ENCODE measurements at regions of chr1 and their contacts with region 1.

Region 1: GRCh38 chr1:89762779-89763648 is 57.8 kb upstream of the LRRC8D start:
- DNase-seq: peak; percentile 95
- H3K4me3 ChIP-seq: peak overlapping the region; percentile 5 to 34 (median 33)
- H3K27ac ChIP-seq: peak overlapping the region; percentile 52
- H3K4me1 ChIP-seq: peaks cover 46% of the 10 kb centered on the region
- H3K27me3 ChIP-seq: no peaks in the 10 kb centered on the region
- CTCF ChIP-seq: peak; percentile 98
- POLR2A ChIP-seq: peak; percentile 58

Region 2: DNA sequence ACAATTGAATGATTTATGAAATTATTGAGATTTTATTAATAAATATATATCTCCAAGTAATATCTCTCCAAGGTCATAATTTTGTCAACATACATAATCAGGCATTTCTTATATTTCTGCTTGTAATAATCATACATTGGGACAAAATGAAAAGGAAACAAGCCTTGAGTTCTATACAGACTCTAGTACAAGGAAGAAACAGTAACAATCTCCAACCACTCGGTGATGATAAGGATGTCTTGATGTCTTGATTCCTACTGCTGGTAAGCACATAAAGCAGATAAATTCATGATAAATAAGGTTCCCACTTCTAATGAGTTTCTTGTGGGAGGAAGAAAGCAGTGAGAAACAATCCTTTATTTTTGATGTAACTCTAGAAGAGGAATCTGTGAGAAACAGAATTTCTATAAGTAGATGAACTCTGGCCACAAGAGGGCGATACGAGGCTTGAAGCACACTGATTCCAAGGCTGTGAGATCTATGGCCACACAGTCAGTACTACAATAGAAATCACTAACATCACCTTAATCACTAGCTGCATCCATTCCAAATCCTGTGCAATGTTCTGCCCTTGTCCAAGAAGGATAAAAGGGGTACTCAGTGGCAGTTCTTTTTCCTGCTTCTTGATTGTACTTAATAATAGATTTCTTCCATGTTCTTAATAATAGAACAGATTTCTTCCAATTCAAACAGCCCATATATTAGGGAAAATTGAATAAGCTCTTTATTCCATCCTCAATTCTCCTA is 279.8 kb before region 1 on chr1:
- CTCF ChIA-PET with region 1: interaction called, 99 read pairs
- POLR2A ChIA-PET with region 1: interaction called, 3 read pairs
- dilution Hi-C with region 1: no loop called
- intact Hi-C with region 1: loop called (anchors 1 kb)
- DNase-seq: peak; percentile 83
- H3K4me3 ChIP-seq: no peak overlapping the region
- H3K27ac ChIP-seq: no peak overlapping the region
- H3K4me1 ChIP-seq: no peaks in the 10 kb centered on the region
- H3K27me3 ChIP-seq: peaks cover 0 to 7% of the 10 kb centered on the region in 2 experiments
- CTCF ChIP-seq: peak; percentile 61 to 67
- POLR2A ChIP-seq: no peak

Region 3: GRCh38 chr1:89598450-89599331 is 164.3 kb before region 1 on chr1:
- CTCF ChIA-PET with region 1: interaction called, 36 read pairs
- POLR2A ChIA-PET with region 1: no interaction called
- dilution Hi-C with region 1: no loop called
- intact Hi-C with region 1: loop called (anchors 1 kb)
- DNase-seq: peak; percentile 68
- H3K4me3 ChIP-seq: no peak overlapping the region
- H3K27ac ChIP-seq: no peak overlapping the region
- H3K4me1 ChIP-seq: peaks cover 1% of the 10 kb centered on the region
- H3K27me3 ChIP-seq: no peaks in the 10 kb centered on the region
- CTCF ChIP-seq: peak; percentile 33 to 48
- POLR2A ChIP-seq: no peak

Region 4: GRCh38 chr1:89622895-89623294 is 140.1 kb before region 1 on chr1:
- CTCF ChIA-PET with region 1: interaction called, 230 read pairs
- POLR2A ChIA-PET with region 1: no interaction called
- dilution Hi-C with region 1: no loop called
- intact Hi-C with region 1: no loop called
- DNase-seq: no peak
- H3K4me3 ChIP-seq: no peak overlapping the region
- H3K27ac ChIP-seq: no peak overlapping the region
- H3K4me1 ChIP-seq: peaks cover 2% of the 10 kb centered on the region
- H3K27me3 ChIP-seq: no peaks in the 10 kb centered on the region
- CTCF ChIP-seq: no peak
- POLR2A ChIP-seq: no peak

Region 5: DNA sequence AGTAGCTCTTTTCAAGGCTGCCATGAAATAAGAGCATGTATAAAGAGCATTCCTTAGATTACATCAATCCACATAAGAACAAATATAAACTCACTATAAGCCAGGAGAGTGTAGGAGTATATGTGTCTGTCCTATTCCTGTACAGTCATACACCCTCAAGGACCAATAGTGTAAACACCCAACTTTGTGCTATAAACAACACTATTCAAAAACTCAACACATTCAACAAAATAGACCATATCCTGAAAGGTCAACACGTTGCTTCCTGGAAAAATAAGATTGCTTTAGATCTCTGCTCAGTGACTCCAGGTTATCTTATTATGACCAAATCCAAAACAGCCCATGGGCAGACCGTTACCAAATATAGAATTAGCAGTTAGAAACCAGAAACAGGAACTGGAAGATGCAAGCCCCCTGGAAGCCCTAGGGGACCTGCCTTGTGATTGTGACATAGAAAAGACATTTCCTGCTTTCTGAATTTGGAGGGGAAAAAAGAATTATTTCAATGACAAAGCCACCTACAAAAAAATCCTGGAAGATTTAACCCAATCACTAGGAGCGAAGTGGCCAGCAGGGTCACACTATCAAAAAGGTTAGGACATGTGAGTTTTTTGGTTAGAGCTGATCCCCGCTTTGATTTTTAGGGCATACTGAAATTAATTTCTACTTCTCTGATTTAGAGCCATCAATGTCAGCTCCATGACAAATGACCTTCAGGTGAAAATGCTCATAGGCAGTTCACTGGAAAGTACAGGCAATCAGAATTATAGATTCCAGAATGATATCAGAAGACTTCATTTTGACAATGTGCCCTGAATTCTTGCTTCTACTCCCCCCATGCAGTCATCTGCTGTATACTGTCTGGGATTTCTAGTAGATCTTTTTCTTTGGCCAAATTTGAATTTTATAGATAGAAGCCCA is 70.2 kb before region 1 on chr1:
- CTCF ChIA-PET with region 1: interaction called, 24 read pairs
- POLR2A ChIA-PET with region 1: no interaction called
- dilution Hi-C with region 1: no loop called
- intact Hi-C with region 1: loop called (anchors 1 kb)
- DNase-seq: peak; percentile 96
- H3K4me3 ChIP-seq: no peak overlapping the region
- H3K27ac ChIP-seq: peak overlapping the region; percentile 86
- H3K4me1 ChIP-seq: peaks cover 57% of the 10 kb centered on the region
- H3K27me3 ChIP-seq: no peaks in the 10 kb centered on the region
- CTCF ChIP-seq: no peak
- POLR2A ChIP-seq: peak; percentile 76

Region 6: DNA sequence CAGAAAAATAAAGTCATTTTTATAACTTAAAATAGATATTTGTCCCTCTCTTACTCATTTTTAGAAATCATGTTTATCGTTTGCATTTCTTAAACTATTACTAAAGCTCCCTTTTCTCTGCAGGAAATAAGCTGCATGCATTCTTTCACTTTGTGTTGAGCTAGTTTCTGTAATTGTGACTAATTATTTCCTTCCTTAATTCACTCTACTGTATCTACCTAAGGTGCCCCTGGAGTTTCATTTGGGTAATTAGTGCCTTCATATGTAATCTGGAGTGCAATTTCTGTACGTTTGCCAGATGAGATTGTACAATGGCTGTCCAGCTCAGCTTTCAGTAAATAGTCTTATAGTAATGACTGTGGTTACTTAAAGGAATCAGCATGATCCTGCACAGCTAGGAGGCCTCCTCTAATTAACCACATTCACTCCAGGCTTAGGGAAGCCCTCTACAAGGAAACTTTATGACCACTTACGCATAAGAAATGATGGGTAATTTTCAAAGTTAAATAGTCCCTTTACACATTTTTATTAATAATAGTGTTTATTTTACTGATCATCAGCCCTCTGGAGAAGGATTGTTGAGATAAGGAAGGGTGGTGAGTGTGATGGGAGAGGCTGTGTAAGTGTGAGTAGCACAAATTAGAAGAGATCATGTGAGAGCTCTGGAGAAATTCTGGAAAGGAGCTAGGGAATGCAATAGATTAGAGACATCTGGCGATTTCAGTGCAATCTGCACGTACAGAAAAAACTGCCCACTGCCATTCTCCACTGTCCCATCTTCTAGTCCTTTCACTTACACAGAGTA is 43.3 kb before region 1 on chr1:
- CTCF ChIA-PET with region 1: interaction called, 40 read pairs
- POLR2A ChIA-PET with region 1: no interaction called
- dilution Hi-C with region 1: no loop called
- intact Hi-C with region 1: loop called (anchors 1 kb)
- DNase-seq: peak; percentile 89
- H3K4me3 ChIP-seq: peak overlapping the region in 2 of 3 experiments; percentile 16 to 52
- H3K27ac ChIP-seq: peak overlapping the region; percentile 76
- H3K4me1 ChIP-seq: peaks cover 75% of the 10 kb centered on the region
- H3K27me3 ChIP-seq: no peaks in the 10 kb centered on the region
- CTCF ChIP-seq: no peak
- POLR2A ChIP-seq: no peak

Region 7: DNA sequence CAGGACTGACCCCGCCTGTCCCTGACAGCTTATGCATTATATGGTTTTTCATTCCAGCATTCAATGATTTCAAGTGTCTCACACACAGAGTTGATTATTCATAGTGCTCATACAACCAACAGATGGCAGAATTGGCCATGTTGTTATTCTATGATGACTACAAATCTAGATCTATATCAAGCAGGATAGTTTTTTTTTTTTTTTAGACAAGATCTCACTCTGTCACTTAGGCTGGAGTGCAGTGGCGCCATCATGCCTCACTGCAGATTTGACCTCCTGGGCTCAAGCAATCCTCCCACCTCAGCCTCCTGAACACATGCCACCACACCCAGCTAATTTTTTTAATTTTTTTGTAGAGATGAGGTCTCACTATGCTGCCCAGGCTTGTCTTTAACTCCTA is 17.7 kb after region 1 on chr1:
- CTCF ChIA-PET with region 1: interaction called, 22 read pairs
- POLR2A ChIA-PET with region 1: no interaction called
- dilution Hi-C with region 1: no loop called
- intact Hi-C with region 1: no loop called
- DNase-seq: peak; percentile 61
- H3K4me3 ChIP-seq: no peak overlapping the region
- H3K27ac ChIP-seq: no peak overlapping the region
- H3K4me1 ChIP-seq: no peaks in the 10 kb centered on the region
- H3K27me3 ChIP-seq: peaks cover 0 to 5% of the 10 kb centered on the region in 2 experiments
- CTCF ChIP-seq: peak; percentile 18 to 23
- POLR2A ChIP-seq: no peak

Region 8: GRCh38 chr1:89820422-89821321 is 57.7 kb after region 1 on chr1 and contains the start of gene LRRC8D:
- CTCF ChIA-PET with region 1: no interaction called
- POLR2A ChIA-PET with region 1: no interaction called
- dilution Hi-C with region 1: no loop called
- intact Hi-C with region 1: no loop called
- DNase-seq: peak; percentile 85
- H3K4me3 ChIP-seq: peak within 1 kb of the TSS; percentile 70 to 94 (median 74)
- H3K27ac ChIP-seq: no peak within 1 kb of the TSS
- H3K4me1 ChIP-seq: peaks cover 11% of the 10 kb centered on the region
- H3K27me3 ChIP-seq: peaks cover 0 to 1% of the 10 kb centered on the region in 2 experiments
- CTCF ChIP-seq: no peak
- POLR2A ChIP-seq: peak; percentile 17
- total RNA-seq, gene LRRC8D: 23.6 and 37.7 TPM in 2 replicates

Region 9: GRCh38 chr1:89884718-89885596 is 121.9 kb after region 1 on chr1:
- CTCF ChIA-PET with region 1: no interaction called
- POLR2A ChIA-PET with region 1: no interaction called
- dilution Hi-C with region 1: no loop called
- intact Hi-C with region 1: no loop called
- DNase-seq: peak; percentile 87
- H3K4me3 ChIP-seq: peak overlapping the region in 1 of 3 experiments; percentile 23
- H3K27ac ChIP-seq: peak overlapping the region; percentile 80
- H3K4me1 ChIP-seq: peaks cover 48% of the 10 kb centered on the region
- H3K27me3 ChIP-seq: no peaks in the 10 kb centered on the region
- CTCF ChIP-seq: no peak
- POLR2A ChIP-seq: no peak